ENCODE measurements at regions of chr17 and their contacts with region 1.

Region 1: GRCh38 chr17:39153599-39154051 is 2.2 kb upstream of the PLXDC1 start:
- DNase-seq: peak; percentile 69
- ATAC-seq: peak; percentile 65
- H3K4me3 ChIP-seq: peak overlapping the region; percentile 55 to 62
- H3K27ac ChIP-seq: peak overlapping the region; percentile 56
- H3K4me1 ChIP-seq: peaks cover 11 to 23% of the 10 kb centered on the region in 2 experiments
- H3K27me3 ChIP-seq: no peaks in the 10 kb centered on the region
- CTCF ChIP-seq: 0 out of 6 replicates have a peak, but pooled peaks of 1 of the 3 experiments have one; percentile 1
- POLR2A ChIP-seq: no peak
- RAD21 ChIP-seq: no peak

Region 2: DNA sequence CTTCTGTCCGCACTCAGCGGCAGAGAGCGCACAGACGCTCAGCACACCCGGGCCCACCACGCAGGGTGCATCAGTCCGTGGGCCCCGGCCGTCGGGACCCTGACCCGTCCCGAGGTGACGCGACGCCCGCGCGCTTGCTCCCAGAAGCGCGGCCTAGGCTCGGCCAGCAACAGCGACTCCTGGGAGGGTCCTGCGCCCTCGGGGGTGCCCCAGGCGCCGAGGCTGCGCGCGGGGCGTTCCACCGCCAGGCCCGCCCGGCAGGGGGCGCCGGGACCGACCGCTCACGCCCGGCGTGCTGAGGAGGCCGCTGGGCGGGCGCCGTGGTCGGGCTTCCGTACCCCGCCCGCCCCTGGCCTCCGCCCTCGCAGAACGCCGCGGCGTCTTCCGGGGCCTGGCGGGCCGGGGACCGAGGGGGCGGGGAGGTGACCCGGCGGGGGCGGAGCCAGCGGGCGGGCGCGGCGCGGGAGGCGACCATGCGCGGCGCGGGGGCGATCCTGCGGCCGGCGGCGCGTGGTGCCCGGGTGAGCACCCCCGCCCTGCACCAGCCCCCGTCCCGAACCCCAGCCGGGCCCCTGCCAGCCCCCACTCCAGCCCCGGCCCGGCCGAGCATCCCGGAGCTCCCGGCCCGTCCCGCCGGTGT is 423.6 kb before region 1 on chr17 and contains the start of gene CISD3:
- CTCF ChIA-PET with region 1: no interaction called
- POLR2A ChIA-PET with region 1: no interaction called
- RAD21 ChIA-PET with region 1: interaction called in 1 of 2 experiments, 6 read pairs
- intact Hi-C with region 1: loop called (anchors 10 kb)
- DNase-seq: peak; percentile 60
- ATAC-seq: peak; percentile 90
- H3K4me3 ChIP-seq: peak within 1 kb of the TSS; percentile 91 to 95
- H3K27ac ChIP-seq: peak within 1 kb of the TSS; percentile 96
- H3K4me1 ChIP-seq: peaks cover 11 to 32% of the 10 kb centered on the region in 2 experiments; a peak in 3 of 4 replicates
- H3K27me3 ChIP-seq: no peaks in the 10 kb centered on the region
- CTCF ChIP-seq: peak; percentile 22 to 45 (median 44); a peak in 4 of 6 replicates
- POLR2A ChIP-seq: peak; percentile 23
- RAD21 ChIP-seq: no peak
- total RNA-seq, gene CISD3: 50.2 TPM

Region 3: DNA sequence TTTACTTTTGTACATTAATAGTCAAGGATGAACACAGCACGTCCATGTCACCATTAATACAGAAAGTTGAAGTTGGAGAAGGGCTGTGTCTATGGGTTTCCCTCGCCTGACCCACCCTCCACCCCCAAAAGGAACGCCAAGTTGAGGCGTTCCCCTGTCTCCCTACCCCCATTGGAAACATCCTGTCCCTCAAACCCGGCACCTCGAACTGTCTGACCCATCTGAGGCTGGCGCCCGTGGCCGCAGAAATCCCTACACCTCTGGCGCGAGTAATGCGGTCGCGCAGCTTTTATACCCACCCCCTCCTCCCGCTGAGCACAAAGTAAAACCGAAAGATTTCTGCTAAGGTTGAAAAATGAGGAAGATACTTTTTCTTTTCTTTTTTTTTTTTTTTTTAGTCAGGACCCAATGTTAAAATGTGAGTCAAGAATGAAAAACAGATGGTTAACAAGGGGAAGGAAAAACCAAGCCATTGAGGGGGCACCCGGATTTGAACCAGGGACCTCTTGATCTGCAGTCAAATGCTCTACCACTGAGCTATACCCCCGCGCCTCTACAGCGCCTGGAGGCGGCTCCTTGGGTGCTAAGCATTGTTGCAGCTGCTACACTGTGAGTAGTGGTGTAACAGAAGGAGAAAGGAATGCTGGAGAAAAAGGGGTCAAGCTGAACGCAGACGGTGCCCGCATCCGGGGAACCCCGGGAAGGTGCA is 284.7 kb before region 1 on chr17:
- CTCF ChIA-PET with region 1: interaction called, 4 read pairs
- POLR2A ChIA-PET with region 1: interaction called, 5 read pairs
- RAD21 ChIA-PET with region 1: no interaction called
- intact Hi-C with region 1: loop called (anchors 2 kb)
- DNase-seq: peak; percentile 79
- ATAC-seq: peak; percentile 55
- H3K4me3 ChIP-seq: peak overlapping the region; percentile 83 to 98
- H3K27ac ChIP-seq: peak overlapping the region; percentile 97
- H3K4me1 ChIP-seq: peaks cover 58 to 85% of the 10 kb centered on the region in 2 experiments
- H3K27me3 ChIP-seq: no peaks in the 10 kb centered on the region
- CTCF ChIP-seq: peak in 2 of 3 experiments; percentile 26 to 27; a peak in 4 of 6 replicates
- POLR2A ChIP-seq: no peak
- RAD21 ChIP-seq: 0 out of 2 replicates have a peak, but pooled peaks have one; percentile 9

Region 4: DNA sequence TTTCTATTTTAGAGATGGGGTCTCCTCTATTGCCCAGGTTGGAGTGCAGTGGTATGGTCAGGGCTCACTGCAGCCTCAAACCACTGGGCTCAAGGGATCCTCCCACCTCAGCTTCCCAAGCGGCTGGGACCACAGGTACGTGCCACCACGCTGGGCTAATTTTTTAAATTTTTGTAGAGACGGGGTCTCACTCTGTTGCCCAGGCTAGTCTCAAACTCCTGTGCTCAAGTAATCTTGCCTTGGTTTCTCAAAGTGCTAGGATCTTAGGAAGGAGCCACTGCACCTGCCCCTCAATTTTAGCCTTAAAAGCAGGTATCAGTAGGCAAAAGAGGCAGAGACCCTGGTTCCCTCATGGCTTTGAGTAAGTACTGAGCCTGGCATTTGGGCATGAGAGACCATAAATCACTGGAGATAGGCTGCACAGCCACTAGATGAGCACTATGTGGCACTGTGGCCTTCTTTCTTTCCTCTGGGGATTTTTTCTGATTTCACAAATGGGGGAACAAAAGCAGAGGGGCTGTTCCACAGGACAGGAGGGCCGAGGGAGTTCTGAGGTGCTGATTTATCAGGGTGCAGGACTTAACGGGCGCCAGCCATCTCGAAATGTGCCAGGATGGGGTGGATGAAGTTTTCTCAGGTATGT is 84.4 kb before region 1 on chr17:
- CTCF ChIA-PET with region 1: no interaction called
- POLR2A ChIA-PET with region 1: no interaction called
- RAD21 ChIA-PET with region 1: no interaction called
- intact Hi-C with region 1: loop called (anchors 1 kb)
- DNase-seq: no peak
- ATAC-seq: peak; percentile 90
- H3K4me3 ChIP-seq: no peak overlapping the region
- H3K27ac ChIP-seq: no peak overlapping the region
- H3K4me1 ChIP-seq: no peaks in the 10 kb centered on the region
- H3K27me3 ChIP-seq: no peaks in the 10 kb centered on the region
- CTCF ChIP-seq: peak; percentile 55 to 71 (median 69); a peak in 5 of 6 replicates
- POLR2A ChIP-seq: no peak
- RAD21 ChIP-seq: peak; percentile 68

Region 5: DNA sequence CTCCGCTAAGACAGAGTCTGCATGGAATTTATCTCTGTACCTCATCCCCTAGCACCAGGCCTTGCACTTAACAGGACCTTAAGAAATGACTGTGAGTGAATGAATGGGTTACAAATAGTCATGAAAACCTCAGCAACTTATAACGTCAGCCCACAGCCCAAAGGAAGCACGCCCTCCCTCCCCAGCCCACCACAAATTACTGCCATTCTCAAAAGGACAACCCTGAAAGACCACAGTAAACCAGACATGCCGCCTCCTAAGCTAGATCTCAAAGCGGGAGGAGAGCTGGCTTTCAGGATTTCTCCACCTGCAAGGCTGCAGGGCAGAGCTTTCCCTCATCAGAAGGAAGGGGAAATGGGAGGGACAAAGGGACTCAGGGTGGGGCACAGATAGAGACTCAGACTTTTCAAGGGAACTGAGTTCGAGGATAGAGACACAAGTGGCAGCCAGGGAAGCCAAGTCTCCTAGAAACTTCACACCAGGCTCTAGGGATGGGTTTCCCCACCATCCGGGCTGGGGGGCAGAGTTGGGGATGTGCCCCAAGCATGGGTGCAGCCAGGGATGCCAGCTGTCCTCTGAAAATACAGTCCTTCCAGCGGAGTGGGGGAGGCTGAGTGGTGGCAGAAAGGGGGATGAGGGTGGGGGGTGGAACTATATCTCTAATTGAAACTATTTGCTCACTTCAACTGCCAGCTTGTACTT is 58.9 kb before region 1 on chr17:
- CTCF ChIA-PET with region 1: no interaction called
- POLR2A ChIA-PET with region 1: no interaction called
- RAD21 ChIA-PET with region 1: no interaction called
- intact Hi-C with region 1: no loop called
- DNase-seq: no peak
- ATAC-seq: no peak
- H3K4me3 ChIP-seq: no peak overlapping the region
- H3K27ac ChIP-seq: no peak overlapping the region
- H3K4me1 ChIP-seq: no peaks in the 10 kb centered on the region
- H3K27me3 ChIP-seq: peaks cover 5% of the 10 kb centered on the region; the same call in 1 of the 2 replicates
- CTCF ChIP-seq: no peak
- POLR2A ChIP-seq: no peak
- RAD21 ChIP-seq: no peak

Region 6: DNA sequence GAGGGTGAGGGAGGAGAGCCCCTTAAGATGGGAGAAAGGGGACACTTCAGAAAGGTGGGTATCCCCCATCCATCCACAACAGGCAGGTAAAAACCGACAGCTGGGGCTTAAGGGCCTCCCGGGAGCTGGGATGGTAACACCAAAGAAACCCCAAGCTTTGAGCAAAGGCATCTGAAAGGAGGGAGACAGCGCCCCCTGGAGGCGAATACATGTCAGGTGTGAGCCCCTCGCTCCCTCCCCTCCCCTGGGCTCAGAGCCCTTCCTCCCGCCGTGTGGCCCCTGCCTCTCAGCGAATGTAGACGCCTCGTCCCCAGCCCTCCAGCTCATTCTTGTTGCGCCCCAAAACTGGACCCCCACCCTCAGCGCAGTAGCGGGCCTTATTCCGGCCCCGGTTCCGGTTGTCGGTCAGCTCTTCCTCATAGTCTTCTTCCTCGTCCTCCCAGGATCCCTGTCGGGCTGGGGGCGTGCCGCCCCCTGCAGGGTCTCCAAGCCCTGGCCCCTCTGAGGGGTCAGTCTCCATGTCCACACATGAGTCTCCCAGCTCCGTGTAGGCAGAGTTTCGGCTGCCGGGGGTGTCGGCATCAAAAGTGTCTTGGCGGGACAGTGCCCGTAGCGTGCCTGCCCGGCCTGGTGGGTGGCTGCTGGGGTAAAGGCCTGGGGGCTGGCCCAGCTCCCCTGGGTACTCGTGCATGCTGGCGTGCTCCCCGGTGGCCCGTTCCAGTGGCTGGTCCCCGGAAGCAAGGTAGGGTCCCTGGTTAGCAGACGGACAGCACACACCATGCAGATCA is 21.5 kb after region 1 on chr17:
- CTCF ChIA-PET with region 1: interaction called, 11 read pairs
- POLR2A ChIA-PET with region 1: interaction called, 3 read pairs
- RAD21 ChIA-PET with region 1: interaction called, 3 read pairs
- intact Hi-C with region 1: no loop called
- DNase-seq: peak; percentile 26
- ATAC-seq: peak; percentile 74
- H3K4me3 ChIP-seq: no peak overlapping the region
- H3K27ac ChIP-seq: no peak overlapping the region
- H3K4me1 ChIP-seq: peaks cover 5 to 27% of the 10 kb centered on the region in 2 experiments; a peak in 3 of 4 replicates
- H3K27me3 ChIP-seq: no peaks in the 10 kb centered on the region
- CTCF ChIP-seq: peak in 2 of 3 experiments; percentile 80 to 83; a peak in 4 of 6 replicates
- POLR2A ChIP-seq: no peak
- RAD21 ChIP-seq: peak; percentile 63

Region 7: GRCh38 chr17:39244600-39245570 is 91.3 kb after region 1 on chr17:
- CTCF ChIA-PET with region 1: interaction called, 10 read pairs
- POLR2A ChIA-PET with region 1: no interaction called
- RAD21 ChIA-PET with region 1: interaction called in 1 of 2 experiments, 5 read pairs
- intact Hi-C with region 1: no loop called
- DNase-seq: peak; percentile 80
- ATAC-seq: peak; percentile 95
- H3K4me3 ChIP-seq: no peak overlapping the region
- H3K27ac ChIP-seq: no peak overlapping the region
- H3K4me1 ChIP-seq: peaks cover under 1 to 13% of the 10 kb centered on the region in 2 experiments; a peak in 3 of 4 replicates
- H3K27me3 ChIP-seq: no peaks in the 10 kb centered on the region
- CTCF ChIP-seq: peak; percentile 91 to 96 (median 95)
- POLR2A ChIP-seq: no peak
- RAD21 ChIP-seq: peak; percentile 95